ENCODE measurements at regions of chr2 and their contacts with region 1.

Region 1: GRCh38 chr2:65129826-65130663 is at the start of gene RAB1A:
- DNase-seq: peak; percentile 98 to 100 (median 99)
- ATAC-seq: peak; percentile 89
- H3K4me3 ChIP-seq: peak within 1 kb of the TSS; percentile 80
- H3K4me3 Mint-ChIP-seq: peak within 1 kb of the TSS; percentile 100
- H3K27ac ChIP-seq: peak within 1 kb of the TSS; percentile 95
- H3K27ac Mint-ChIP-seq: peak within 1 kb of the TSS; percentile 98
- H3K4me1 ChIP-seq: peaks cover 30% of the 10 kb centered on the region
- H3K4me1 Mint-ChIP-seq: peaks cover 45% of the 10 kb centered on the region
- H3K27me3 ChIP-seq: no peaks in the 10 kb centered on the region
- H3K27me3 Mint-ChIP-seq: no peaks in the 10 kb centered on the region
- CTCF ChIP-seq: peak; percentile 37
- total RNA-seq, gene RAB1A: 85.3 to 87.6 TPM

Region 2: DNA sequence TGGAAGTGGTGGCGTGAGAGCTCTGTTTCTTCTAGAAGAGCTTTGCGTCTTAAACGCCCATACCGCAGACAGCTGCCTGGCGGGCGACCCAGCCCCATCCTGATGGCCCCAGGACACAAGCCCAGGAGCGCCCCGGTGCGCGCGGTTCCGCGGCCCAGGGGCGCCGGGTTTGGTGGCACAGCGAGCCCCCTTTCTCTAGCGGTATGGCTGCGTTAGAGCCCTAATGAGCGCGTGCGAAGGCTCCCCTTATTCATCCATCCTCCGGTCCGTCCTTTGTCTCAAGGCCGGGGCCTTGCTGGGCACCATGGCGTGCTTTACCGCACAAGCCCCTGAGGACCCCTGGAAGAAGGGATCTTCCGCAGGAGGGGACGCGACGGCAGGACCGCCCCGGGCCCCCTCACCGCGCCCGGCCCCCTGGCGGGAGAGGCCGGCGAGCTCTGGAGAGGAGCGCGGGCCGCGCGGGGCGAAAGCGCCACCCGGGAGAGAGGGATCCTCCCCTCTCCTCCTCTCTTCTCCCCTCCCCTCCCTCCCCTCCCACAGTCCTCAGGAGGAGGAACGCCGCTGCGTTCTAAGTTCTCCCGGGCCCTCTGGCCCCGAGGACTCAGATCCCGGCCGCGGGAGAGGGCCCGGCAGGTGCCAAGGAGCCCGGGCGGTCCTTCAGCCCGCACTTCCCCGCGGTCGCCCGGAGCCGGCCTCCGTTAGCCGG is 141.5 kb before region 1 on chr2:
- CTCF ChIA-PET with region 1: no interaction called
- POLR2A ChIA-PET with region 1: interaction called, 10 read pairs
- intact Hi-C with region 1: loop called in 1 of 2 experiments (anchors 5 kb)
- DNase-seq: peak in 13 of 14 experiments; percentile 7 to 88 (median 43)
- ATAC-seq: peak; percentile 48
- H3K4me3 ChIP-seq: peak overlapping the region; percentile 62
- H3K4me3 Mint-ChIP-seq: peak overlapping the region; percentile 84
- H3K27ac ChIP-seq: no peak overlapping the region
- H3K27ac Mint-ChIP-seq: peak overlapping the region; percentile 6
- H3K4me1 ChIP-seq: peaks cover 25% of the 10 kb centered on the region
- H3K4me1 Mint-ChIP-seq: peaks cover 29% of the 10 kb centered on the region
- H3K27me3 ChIP-seq: no peaks in the 10 kb centered on the region
- H3K27me3 Mint-ChIP-seq: peaks cover 4% of the 10 kb centered on the region
- CTCF ChIP-seq: no peak

Region 3: GRCh38 chr2:65070172-65070830 is 59.7 kb before region 1 on chr2:
- CTCF ChIA-PET with region 1: interaction called, 13 read pairs
- POLR2A ChIA-PET with region 1: interaction called, 8 read pairs
- intact Hi-C with region 1: loop called in 1 of 2 experiments (anchors 5 kb)
- DNase-seq: no peak
- ATAC-seq: no peak
- H3K4me3 ChIP-seq: no peak overlapping the region
- H3K4me3 Mint-ChIP-seq: no peak overlapping the region
- H3K27ac ChIP-seq: no peak overlapping the region
- H3K27ac Mint-ChIP-seq: peak overlapping the region; percentile 60
- H3K4me1 ChIP-seq: peaks cover 32% of the 10 kb centered on the region
- H3K4me1 Mint-ChIP-seq: peaks cover 24% of the 10 kb centered on the region
- H3K27me3 ChIP-seq: no peaks in the 10 kb centered on the region
- H3K27me3 Mint-ChIP-seq: no peaks in the 10 kb centered on the region
- CTCF ChIP-seq: no peak

Region 4: GRCh38 chr2:65096948-65097347 is 33.1 kb before region 1 on chr2:
- CTCF ChIA-PET with region 1: no interaction called
- POLR2A ChIA-PET with region 1: interaction called, 12 read pairs
- intact Hi-C with region 1: no loop called
- DNase-seq: no peak
- ATAC-seq: no peak
- H3K4me3 ChIP-seq: no peak overlapping the region
- H3K4me3 Mint-ChIP-seq: no peak overlapping the region
- H3K27ac ChIP-seq: no peak overlapping the region
- H3K27ac Mint-ChIP-seq: no peak overlapping the region
- H3K4me1 ChIP-seq: no peaks in the 10 kb centered on the region
- H3K4me1 Mint-ChIP-seq: peaks cover 40% of the 10 kb centered on the region
- H3K27me3 ChIP-seq: no peaks in the 10 kb centered on the region
- H3K27me3 Mint-ChIP-seq: no peaks in the 10 kb centered on the region
- CTCF ChIP-seq: no peak

Region 5: GRCh38 chr2:65227425-65228262 is 97.6 kb after region 1 on chr2 and contains the start of gene ACTR2:
- CTCF ChIA-PET with region 1: interaction called, 4 read pairs
- POLR2A ChIA-PET with region 1: interaction called, 55 read pairs
- intact Hi-C with region 1: loop called (anchors 2 to 5 kb)
- DNase-seq: peak; percentile 87 to 98 (median 92)
- ATAC-seq: peak; percentile 93
- H3K4me3 ChIP-seq: peak within 1 kb of the TSS; percentile 76
- H3K4me3 Mint-ChIP-seq: peak within 1 kb of the TSS; percentile 100
- H3K27ac ChIP-seq: peak within 1 kb of the TSS; percentile 97 to 98
- H3K27ac Mint-ChIP-seq: peak within 1 kb of the TSS; percentile 98
- H3K4me1 ChIP-seq: peaks cover 35% of the 10 kb centered on the region
- H3K4me1 Mint-ChIP-seq: peaks cover 53% of the 10 kb centered on the region
- H3K27me3 ChIP-seq: no peaks in the 10 kb centered on the region
- H3K27me3 Mint-ChIP-seq: no peaks in the 10 kb centered on the region
- CTCF ChIP-seq: no peak
- total RNA-seq, gene ACTR2: 128 to 130 TPM

Region 6: DNA sequence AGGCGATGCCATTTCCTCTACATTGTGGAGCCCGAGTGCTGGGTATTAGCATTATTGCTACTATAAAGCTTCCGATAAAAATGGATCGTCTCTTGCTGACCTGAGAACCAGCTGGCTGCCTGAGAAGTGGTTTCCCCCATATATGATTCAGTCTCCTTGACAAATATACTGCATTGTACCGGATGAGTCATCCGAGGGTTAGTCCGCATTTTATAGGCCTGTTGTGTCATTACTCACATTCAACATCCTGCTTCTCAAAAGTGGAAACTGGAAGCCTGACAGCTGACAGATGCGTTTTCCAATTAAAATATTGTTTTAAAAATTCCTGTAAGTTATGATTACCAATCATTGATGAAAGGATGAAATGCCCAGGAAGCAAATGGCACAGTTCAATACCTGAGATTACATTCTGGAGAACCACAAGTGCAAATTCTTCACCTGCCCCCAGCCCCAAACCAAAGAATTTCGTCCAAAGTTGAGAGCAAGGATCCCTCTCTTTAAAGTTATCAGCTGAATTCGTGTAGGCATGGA is 236.6 kb after region 1 on chr2:
- CTCF ChIA-PET with region 1: no interaction called
- POLR2A ChIA-PET with region 1: no interaction called
- intact Hi-C with region 1: no loop called
- DNase-seq: peak in 4 of 14 experiments; percentile 28 to 72 (median 51)
- ATAC-seq: peak; percentile 32
- H3K4me3 ChIP-seq: no peak overlapping the region
- H3K4me3 Mint-ChIP-seq: no peak overlapping the region
- H3K27ac ChIP-seq: no peak overlapping the region
- H3K27ac Mint-ChIP-seq: no peak overlapping the region
- H3K4me1 ChIP-seq: no peaks in the 10 kb centered on the region
- H3K4me1 Mint-ChIP-seq: no peaks in the 10 kb centered on the region
- H3K27me3 ChIP-seq: no peaks in the 10 kb centered on the region
- H3K27me3 Mint-ChIP-seq: no peaks in the 10 kb centered on the region
- CTCF ChIP-seq: no peak

Region 7: DNA sequence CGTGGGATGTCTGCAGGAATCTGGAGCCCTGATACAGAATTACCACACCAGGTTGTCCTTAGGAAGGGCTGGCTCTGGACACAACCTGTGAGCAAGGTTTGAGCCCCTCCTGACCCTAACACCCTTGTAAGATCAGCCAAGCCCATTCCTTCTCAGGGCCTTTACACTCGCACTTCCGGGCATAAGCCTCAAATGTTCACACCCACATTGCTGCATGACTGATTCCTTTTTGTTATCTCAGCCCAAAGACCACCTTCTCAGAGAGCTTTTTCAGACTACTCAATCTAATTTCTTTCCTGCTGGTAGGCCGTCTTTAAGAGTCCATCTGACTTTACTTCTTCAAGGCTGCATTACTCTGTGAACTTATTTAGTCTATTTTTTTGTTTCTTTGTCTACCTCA is 766.4 kb after region 1 on chr2:
- CTCF ChIA-PET with region 1: no interaction called
- POLR2A ChIA-PET with region 1: no interaction called
- intact Hi-C with region 1: no loop called
- DNase-seq: no peak
- ATAC-seq: no peak
- H3K4me3 ChIP-seq: no peak overlapping the region
- H3K4me3 Mint-ChIP-seq: no peak overlapping the region
- H3K27ac ChIP-seq: no peak overlapping the region
- H3K27ac Mint-ChIP-seq: no peak overlapping the region
- H3K4me1 ChIP-seq: no peaks in the 10 kb centered on the region
- H3K4me1 Mint-ChIP-seq: no peaks in the 10 kb centered on the region
- H3K27me3 ChIP-seq: no peaks in the 10 kb centered on the region
- H3K27me3 Mint-ChIP-seq: no peaks in the 10 kb centered on the region
- CTCF ChIP-seq: no peak